ENCODE measurements at regions of chr12 and their contacts with region 1.

Region 1: DNA sequence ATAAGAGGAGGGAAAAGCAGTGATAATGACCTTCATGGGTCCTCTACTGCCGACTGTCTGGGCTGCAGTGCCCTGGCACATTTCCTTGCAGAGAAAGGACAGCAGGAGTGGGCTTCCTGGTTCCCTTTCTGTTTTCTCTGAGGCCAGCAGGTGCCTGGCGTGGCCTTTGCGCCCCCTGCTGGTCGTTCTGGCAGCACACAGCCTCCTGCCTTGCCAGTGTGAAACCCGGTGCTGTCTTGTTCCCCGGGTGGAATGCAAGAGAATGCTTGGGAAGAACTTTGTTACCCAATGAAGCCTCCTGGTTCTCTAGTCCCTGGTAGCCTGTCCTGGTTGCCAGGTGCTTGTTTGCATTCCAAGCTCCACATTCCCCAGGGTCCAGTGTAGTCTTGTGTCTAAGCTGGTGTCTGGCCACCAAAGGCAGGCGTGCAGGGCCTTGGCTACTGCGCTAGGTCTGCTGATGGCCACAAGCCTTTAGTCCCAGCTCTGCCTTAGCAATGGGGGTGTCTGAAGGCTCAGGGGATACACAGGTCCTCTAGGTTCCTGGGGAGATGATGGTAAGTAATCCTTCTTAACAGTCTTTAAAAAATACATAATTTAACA is 1392.4 kb upstream of the TMEM132C start:
- DNase-seq: peak; percentile 68 to 96 (median 80)

Region 2: GRCh38 chr12:125183187-125184067 is 1691.1 kb before region 1 on chr12:
- intact Hi-C with region 1: loop called (anchors 2 kb)
- DNase-seq: peak; percentile 89 to 99 (median 92)

Region 3: GRCh38 chr12:125538401-125539199 is 1335.9 kb before region 1 on chr12:
- intact Hi-C with region 1: loop called (anchors 5 kb)
- DNase-seq: peak in 2 of 10 donors; percentile 40 to 84

Region 4: DNA sequence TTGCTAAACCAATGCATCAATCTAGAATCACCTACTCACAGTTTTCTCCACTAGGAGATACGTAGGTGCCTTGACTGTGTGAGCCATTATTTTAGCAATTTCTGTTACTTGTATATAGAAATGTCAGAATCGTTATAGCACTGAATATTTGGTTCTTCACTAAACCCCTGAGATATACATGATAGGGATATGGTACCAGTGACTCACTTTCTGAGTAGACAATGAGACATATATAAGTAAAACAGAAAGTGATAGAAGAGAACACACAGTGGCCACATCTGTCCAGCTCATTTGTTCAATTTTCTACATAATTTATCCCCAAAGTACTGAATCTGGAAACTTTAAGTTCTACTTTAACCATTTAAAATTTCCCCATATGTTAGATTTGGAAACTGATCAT is 113.1 kb before region 1 on chr12:
- intact Hi-C with region 1: no loop called
- DNase-seq: no peak

Region 5: DNA sequence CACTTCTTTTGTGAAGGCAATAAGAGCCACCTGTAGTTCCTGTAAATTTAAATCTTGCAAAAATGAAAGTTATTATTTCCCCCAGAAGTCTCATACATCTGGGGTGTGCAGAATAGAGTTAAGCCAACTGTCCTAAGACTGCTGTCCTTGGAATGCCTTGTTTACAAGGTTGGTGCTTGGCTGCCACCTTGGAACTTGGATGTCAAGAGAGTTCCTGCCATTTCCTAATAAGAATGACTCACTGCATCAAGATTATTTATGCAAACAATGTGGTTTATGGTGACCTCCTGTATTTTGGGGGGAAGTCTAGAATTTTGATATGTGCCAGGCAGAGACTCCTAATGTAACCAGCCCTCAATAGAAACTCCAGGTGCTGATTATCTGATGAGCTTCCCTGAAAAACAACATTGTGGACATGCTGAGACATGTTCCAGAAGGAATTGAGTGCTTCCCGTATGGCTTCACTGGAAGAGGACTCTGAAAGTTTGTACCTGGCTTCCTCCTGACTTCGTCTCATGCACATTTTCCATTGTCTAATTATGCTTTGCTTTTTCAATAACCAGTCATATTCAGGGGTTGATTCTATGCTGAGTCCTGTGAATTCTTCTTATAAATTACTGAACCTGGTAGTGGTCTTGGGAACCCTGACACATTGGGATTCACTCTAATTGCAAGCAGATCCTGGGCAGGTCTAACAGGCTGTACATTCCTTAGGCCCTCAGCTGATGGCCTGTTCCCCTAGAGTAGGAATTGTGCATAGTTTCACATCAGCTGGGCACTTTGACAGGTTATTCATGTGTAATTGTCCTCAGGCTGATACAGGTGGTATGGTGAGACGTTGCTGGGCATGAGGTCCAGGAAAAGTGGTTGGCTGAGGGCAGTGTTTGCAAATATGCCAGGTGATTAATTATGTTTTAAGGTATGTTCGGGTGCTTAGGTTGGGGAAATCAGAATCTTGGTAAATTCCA is 21.7 kb after region 1 on chr12:
- intact Hi-C with region 1: no loop called
- DNase-seq: no peak